ENCODE measurements at regions of chr17 and their contacts with region 1.

Region 1: GRCh38 chr17:1055751-1056645 is 59.1 kb downstream of the TIMM22 start:
- DNase-seq: peak in 1 of 2 experiments; percentile 87
- H3K4me3 ChIP-seq: no peak overlapping the region
- H3K27ac ChIP-seq: no peak overlapping the region
- H3K4me1 ChIP-seq: no peaks in the 10 kb centered on the region
- H3K27me3 ChIP-seq: no peaks in the 10 kb centered on the region
- CTCF ChIP-seq: peak; percentile 76 to 81 (median 77)
- EP300 ChIP-seq: no peak
- POLR2A ChIP-seq: no peak
- RAD21 ChIP-seq: peak; percentile 85 to 86

Region 2: GRCh38 chr17:996554-997344 is 59.2 kb before region 1 on chr17 and contains the start of gene TIMM22:
- CTCF ChIA-PET with region 1: interaction called, 144 read pairs
- POLR2A ChIA-PET with region 1: interaction called, 3 read pairs
- DNase-seq: peak; percentile 94 to 97
- H3K4me3 ChIP-seq: peak within 1 kb of the TSS; percentile 86 to 99 (median 94)
- H3K27ac ChIP-seq: peak within 1 kb of the TSS; percentile 92
- H3K4me1 ChIP-seq: peaks cover 0 to 5% (median 0%) of the 10 kb centered on the region in 4 experiments; a peak in 2 of 7 replicates
- H3K27me3 ChIP-seq: no peaks in the 10 kb centered on the region; a peak in 1 of 7 replicates
- CTCF ChIP-seq: peak; percentile 82 to 93 (median 88)
- EP300 ChIP-seq: peak; percentile 38 to 99; a peak in 2 of 3 replicates
- POLR2A ChIP-seq: peak; percentile 79 to 93
- RAD21 ChIP-seq: peak; percentile 91 to 93
- total RNA-seq, gene TIMM22: 17.2 and 17.4 TPM in 2 replicates

Region 3: DNA sequence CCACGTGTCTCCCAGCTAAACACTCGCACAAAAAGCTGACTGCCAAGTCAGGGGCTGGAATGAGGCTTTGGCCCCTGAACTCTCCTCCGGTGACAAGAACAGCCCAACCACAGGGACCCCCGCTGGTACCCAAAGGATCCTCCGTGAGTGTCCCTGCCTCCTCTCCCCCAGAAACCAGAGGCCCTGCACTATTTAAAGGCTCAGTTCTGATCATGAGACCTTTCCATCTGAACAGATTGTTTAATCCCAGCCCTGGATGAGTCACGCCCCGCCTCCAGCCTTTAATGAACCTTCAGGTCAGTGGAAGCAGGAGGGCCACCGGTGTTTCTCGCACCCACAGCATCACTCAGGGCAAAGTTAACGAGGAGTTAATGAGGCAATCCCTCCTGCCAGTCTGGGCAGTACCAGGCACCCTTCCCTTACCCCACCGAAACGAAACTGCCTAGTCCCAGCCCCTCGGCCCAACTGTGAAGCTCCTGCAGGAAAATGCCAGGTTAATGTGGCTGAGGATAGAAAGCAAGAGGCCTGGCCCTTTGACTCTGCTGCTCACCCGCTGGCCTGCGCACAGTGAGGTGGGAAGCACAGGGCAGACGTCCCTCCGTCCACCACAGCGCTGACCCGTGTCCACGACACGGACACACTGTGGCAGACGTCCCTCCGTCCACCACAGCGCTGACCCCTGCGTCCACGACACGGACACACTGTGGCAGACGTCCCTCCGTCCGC is 26.6 kb before region 1 on chr17:
- CTCF ChIA-PET with region 1: interaction called, 24 read pairs
- POLR2A ChIA-PET with region 1: no interaction called
- DNase-seq: no peak
- H3K4me3 ChIP-seq: no peak overlapping the region
- H3K27ac ChIP-seq: no peak overlapping the region
- H3K4me1 ChIP-seq: peaks cover 0 to 6% (median under 1%) of the 10 kb centered on the region in 4 experiments; a peak in 2 of 7 replicates
- H3K27me3 ChIP-seq: peaks cover 0 to 14% (median 7%) of the 10 kb centered on the region in 4 experiments; a peak in 5 of 7 replicates
- CTCF ChIP-seq: no peak
- EP300 ChIP-seq: no peak
- POLR2A ChIP-seq: no peak
- RAD21 ChIP-seq: no peak

Region 4: GRCh38 chr17:1067282-1067956 is 11.4 kb after region 1 on chr17:
- CTCF ChIA-PET with region 1: interaction called, 17 read pairs
- POLR2A ChIA-PET with region 1: no interaction called
- DNase-seq: no peak
- H3K4me3 ChIP-seq: no peak overlapping the region
- H3K27ac ChIP-seq: no peak overlapping the region
- H3K4me1 ChIP-seq: no peaks in the 10 kb centered on the region; a peak in 1 of 7 replicates
- H3K27me3 ChIP-seq: no peaks in the 10 kb centered on the region
- CTCF ChIP-seq: no peak
- EP300 ChIP-seq: no peak
- POLR2A ChIP-seq: no peak
- RAD21 ChIP-seq: no peak

Region 5: GRCh38 chr17:1083451-1084187 is 27.6 kb after region 1 on chr17:
- CTCF ChIA-PET with region 1: interaction called, 15 read pairs
- POLR2A ChIA-PET with region 1: no interaction called
- DNase-seq: no peak
- H3K4me3 ChIP-seq: no peak overlapping the region
- H3K27ac ChIP-seq: no peak overlapping the region
- H3K4me1 ChIP-seq: peaks cover 0 to 15% (median 8%) of the 10 kb centered on the region in 4 experiments; a peak in 6 of 7 replicates
- H3K27me3 ChIP-seq: peaks cover 0 to 2% (median 1%) of the 10 kb centered on the region in 4 experiments; a peak in 2 of 7 replicates
- CTCF ChIP-seq: no peak
- EP300 ChIP-seq: no peak
- POLR2A ChIP-seq: no peak
- RAD21 ChIP-seq: no peak

Region 6: DNA sequence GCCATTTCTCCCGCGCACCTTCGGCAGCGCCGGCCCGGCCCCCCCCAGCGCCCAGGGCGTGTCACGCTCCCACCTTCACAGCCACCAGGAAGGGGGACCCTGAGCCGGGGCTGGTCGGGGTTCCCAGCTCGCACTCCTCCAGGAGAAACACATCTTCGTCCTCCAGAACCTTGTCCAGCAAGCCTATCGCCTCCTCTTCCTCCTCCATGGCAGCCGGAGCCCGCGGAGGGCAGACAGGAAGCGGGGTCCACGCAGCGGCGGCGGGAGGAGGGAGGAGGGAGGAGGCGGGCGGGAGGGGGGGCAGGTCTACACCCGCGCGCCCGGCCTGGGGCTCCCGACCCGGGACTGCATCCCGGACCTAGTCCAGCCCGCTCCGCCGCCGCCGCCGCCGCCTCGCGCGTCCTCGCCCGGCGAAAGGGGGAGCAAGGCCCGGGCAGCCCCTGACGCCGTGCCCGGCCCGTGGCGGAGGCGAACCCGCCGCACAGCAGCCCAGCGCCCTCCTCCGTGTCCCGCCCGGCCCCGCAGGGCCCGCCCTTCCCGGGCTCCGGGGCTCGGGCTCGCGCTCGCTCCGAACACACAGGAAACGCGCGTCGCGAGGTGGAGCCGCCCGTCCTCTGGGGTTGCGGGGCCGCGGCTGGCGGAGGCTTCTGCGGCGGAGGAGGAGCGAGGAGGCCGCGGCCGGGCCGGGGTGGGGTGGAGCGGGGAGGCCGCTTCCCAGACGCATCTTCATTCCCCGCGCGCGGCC is 53.0 kb after region 1 on chr17:
- CTCF ChIA-PET with region 1: interaction called, 10 read pairs
- POLR2A ChIA-PET with region 1: no interaction called
- DNase-seq: peak in 1 of 2 experiments; percentile 79
- H3K4me3 ChIP-seq: peak overlapping the region; percentile 47 to 84 (median 50)
- H3K27ac ChIP-seq: no peak overlapping the region
- H3K4me1 ChIP-seq: peaks cover 0 to 28% (median 20%) of the 10 kb centered on the region in 4 experiments; a peak in 6 of 7 replicates
- H3K27me3 ChIP-seq: peaks cover 0 to 10% (median 7%) of the 10 kb centered on the region in 4 experiments; a peak in 5 of 7 replicates
- CTCF ChIP-seq: no peak
- EP300 ChIP-seq: no peak
- POLR2A ChIP-seq: no peak
- RAD21 ChIP-seq: no peak

Region 7: DNA sequence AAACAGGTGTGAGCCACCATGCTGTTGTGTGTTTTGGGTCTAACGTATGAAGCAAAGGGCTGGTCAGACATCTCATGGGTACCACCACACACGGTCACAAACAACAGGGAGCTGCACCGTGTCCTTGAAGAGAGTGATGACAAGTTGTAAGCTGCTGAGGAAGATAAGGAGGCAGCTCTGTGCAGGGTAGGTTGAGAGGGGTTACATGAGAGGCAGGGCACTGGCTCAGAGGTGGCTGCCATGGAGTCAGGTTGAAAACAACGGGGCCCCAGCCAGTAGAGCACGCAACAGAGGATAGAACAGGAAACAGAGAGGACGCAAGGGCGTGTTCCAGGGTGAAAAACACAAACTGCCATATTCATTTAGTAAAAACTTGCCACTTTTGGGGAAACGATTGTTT is 275.7 kb after region 1 on chr17:
- CTCF ChIA-PET with region 1: no interaction called
- POLR2A ChIA-PET with region 1: no interaction called
- DNase-seq: no peak
- H3K4me3 ChIP-seq: no peak overlapping the region
- H3K27ac ChIP-seq: no peak overlapping the region
- H3K4me1 ChIP-seq: no peaks in the 10 kb centered on the region
- H3K27me3 ChIP-seq: no peaks in the 10 kb centered on the region
- CTCF ChIP-seq: no peak
- EP300 ChIP-seq: no peak
- POLR2A ChIP-seq: no peak
- RAD21 ChIP-seq: no peak

Measured in H1 (cell line).